Esophagus muscularis mucosa (tissue), 4 donors: ENCODE measurements at regions of chr6 and their contacts with region 1.

Region 1: DNA sequence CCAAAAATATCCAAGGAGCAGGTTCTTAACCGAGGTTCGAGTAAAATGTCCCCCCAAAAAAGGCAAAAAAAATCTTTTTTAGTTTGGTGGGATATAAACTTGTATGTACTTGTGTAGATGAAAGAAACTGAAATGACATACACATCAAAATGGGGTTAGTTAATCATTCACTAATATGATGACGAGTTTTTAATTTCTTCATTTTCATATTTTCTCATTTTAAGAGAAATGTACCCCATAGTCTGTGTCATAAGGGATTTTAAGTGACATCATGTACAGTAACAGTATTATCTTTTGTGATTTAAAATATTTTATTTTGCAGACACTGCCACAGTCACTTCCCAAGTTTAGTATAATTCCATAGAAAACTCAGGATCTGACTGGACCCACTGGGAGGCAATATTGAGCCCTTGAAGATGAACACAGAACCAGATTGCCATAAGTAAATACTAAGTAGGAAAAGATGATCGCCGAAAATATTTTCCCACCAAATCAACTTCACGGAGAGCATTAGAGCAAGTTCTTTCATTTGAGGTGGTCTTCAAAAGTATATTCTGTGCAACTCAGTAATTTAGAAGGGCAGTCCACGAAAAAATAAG is 17.5 kb upstream of the PKHD1 start:
- DNase-seq: no peak
- H3K4me3 ChIP-seq: no peak overlapping the region
- H3K27ac ChIP-seq: no peak overlapping the region
- H3K4me1 ChIP-seq: no peaks in the 10 kb centered on the region
- H3K27me3 ChIP-seq: no peaks in the 10 kb centered on the region
- CTCF ChIP-seq: peak in 2 of 3 experiments; percentile 7 to 20
- EP300 ChIP-seq: no peak
- POLR2A ChIP-seq: no peak

Region 2: GRCh38 chr6:51814418-51814817 is 290.5 kb before region 1 on chr6:
- intact Hi-C with region 1: no loop called
- DNase-seq: no peak
- H3K4me3 ChIP-seq: no peak overlapping the region
- H3K27ac ChIP-seq: no peak overlapping the region
- H3K4me1 ChIP-seq: no peaks in the 10 kb centered on the region
- H3K27me3 ChIP-seq: no peaks in the 10 kb centered on the region
- CTCF ChIP-seq: no peak
- EP300 ChIP-seq: no peak
- POLR2A ChIP-seq: no peak

Region 3: DNA sequence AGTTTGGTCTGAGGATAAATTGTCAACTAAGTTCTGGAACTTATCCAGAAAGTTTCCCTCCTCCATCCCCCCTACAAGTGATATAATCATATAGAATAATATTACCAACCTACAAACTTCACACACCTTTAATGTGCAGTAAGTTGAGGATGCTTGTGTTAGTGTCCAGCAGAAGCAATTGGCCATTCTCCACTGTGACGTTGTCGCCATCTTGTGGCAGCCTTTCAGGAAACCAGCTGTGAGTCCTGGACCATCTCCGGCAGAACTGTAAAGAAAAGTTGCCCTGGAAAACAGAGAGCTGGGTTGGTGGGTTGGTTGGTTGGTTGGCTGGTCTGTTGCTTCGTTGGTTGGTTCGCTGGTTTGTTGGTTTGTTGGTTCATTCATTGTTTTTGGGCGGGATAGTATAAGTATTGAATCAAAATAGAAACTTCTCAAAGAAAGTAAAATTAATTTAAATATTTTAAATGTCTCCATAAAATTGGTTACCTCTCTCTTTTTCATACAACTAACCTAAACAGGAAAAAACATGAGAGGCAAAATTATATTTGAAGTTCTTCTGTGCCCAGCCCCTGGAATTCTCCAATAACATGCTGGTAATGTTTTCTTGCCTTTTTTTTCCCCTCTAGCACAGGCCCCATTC is 145.0 kb before region 1 on chr6:
- intact Hi-C with region 1: no loop called
- DNase-seq: peak; percentile 70
- H3K4me3 ChIP-seq: no peak overlapping the region
- H3K27ac ChIP-seq: no peak overlapping the region
- H3K4me1 ChIP-seq: no peaks in the 10 kb centered on the region
- H3K27me3 ChIP-seq: no peaks in the 10 kb centered on the region
- CTCF ChIP-seq: peak; percentile 46 to 60 (median 55)
- EP300 ChIP-seq: no peak
- POLR2A ChIP-seq: no peak

Region 4: DNA sequence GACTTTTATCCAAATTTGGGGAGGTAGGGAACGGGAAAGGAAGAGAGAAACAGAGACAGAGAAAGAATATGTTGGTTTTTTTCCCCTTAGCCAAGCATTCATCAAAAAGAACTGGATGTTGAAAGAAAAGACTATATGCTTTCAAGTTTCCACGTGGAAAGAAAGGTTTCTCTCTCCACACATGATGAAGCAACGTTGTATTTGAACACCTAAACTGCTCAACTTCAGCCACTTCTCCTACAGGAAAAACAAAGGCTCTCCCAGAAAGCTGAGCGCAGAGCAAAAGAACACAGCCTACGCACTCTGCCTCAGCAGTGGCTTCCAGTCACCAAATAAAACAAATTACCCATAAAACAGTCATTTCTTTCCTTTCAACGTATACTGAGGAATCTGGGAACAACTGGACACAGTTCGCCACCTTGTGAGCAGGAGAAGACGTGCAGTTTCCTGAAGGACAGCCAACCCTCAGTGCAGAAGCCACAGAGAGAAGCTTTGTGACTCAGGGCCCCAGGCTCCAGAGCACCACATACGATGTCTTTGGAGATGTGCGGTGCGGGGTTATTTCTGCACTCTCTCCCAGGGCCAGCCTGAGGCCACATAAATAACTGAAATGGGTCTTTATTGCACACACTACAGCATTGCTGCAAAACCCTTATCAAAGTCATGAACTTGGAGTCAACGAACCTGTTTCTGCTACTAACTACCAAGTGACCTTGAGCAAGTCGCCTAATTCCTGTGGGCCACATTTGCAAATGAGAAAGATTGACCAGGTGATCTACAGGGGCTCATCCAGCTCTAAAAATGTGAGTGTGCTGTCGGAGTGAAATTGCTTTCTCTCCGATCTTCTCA is 129.3 kb after region 1 on chr6:
- intact Hi-C with region 1: loop called (anchors 5 kb)
- DNase-seq: no peak
- H3K4me3 ChIP-seq: no peak overlapping the region
- H3K27ac ChIP-seq: no peak overlapping the region
- H3K4me1 ChIP-seq: peaks cover 0 to 6% (median 3%) of the 10 kb centered on the region in 4 donors
- H3K27me3 ChIP-seq: peaks cover 0 to 6% (median 0%) of the 10 kb centered on the region in 4 donors
- CTCF ChIP-seq: peak; percentile 44 to 62 (median 50)
- EP300 ChIP-seq: no peak
- POLR2A ChIP-seq: no peak